ENCODE measurements at regions of chr2 and their contacts with region 1.

Region 1: DNA sequence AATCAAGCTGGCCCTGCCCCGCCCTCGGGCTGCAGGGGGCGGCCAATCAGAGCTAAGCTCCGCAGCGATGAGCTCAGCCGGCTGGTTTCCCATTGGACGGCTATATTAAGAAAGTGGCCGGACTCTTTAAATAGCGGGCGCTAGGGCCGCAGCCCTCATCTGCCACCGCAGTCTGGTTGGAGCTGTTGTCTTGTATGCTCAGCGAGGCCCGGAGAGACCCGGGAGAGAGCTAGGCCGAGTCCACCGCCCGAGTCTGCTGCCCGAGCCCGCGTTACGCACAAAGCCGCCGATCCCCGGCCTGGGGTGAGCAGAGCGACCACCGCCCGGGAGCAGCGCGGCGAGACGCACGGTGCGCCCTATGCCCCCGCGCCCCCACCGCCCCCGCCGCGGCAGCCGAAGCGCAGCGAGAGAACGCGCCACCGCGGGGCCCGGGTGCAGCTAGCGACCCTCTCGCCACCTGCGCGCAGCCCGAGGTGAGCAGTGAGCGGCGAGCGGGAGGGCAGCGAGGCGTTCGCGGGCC is at the start of gene RHOB:
- DNase-seq: peak; percentile 100
- H3K4me3 ChIP-seq: peak within 1 kb of the TSS; percentile 82 to 92
- H3K27ac ChIP-seq: peak within 1 kb of the TSS; percentile 82 to 96
- H3K4me1 ChIP-seq: peaks cover 32 to 47% of the 10 kb centered on the region in 2 experiments
- H3K27me3 ChIP-seq: no peaks in the 10 kb centered on the region
- CTCF ChIP-seq: no peak
- EP300 ChIP-seq: peak; percentile 37 to 66; a peak in 3 of 4 replicates
- RAD21 ChIP-seq: peak; percentile 46
- polyA plus RNA-seq, gene RHOB: 43.5 and 50.3 TPM in 2 replicates

Region 2: DNA sequence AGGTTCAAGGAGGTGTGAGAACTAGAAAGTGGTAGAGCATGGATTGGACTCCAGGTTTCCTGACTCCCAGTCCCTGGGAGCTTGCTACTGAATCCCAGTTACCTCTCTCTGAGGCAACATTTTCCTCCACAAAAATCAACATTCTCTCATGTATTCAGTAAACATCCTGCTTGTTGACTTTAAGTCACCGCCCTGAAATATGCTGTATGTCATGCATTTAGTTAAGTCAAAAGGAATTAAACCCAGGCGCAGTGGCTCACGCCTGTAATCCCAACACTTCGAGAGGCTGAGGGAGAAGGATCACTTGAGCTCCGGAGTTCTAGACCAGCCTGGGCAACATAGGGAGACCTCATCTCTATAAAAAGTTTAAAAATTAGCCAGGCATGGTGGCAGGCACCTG is 438.3 kb before region 1 on chr2:
- CTCF ChIA-PET with region 1: no interaction called
- POLR2A ChIA-PET with region 1: no interaction called
- DNase-seq: no peak
- H3K4me3 ChIP-seq: no peak overlapping the region
- H3K27ac ChIP-seq: no peak overlapping the region
- H3K4me1 ChIP-seq: peaks cover 0 to 29% of the 10 kb centered on the region in 2 experiments; a peak in 2 of 4 replicates
- H3K27me3 ChIP-seq: no peaks in the 10 kb centered on the region
- CTCF ChIP-seq: no peak
- EP300 ChIP-seq: no peak
- RAD21 ChIP-seq: no peak

Region 3: GRCh38 chr2:20466417-20466911 is 19.5 kb after region 1 on chr2:
- CTCF ChIA-PET with region 1: interaction called, 5 read pairs
- POLR2A ChIA-PET with region 1: interaction called, 33 read pairs
- DNase-seq: peak; percentile 47
- H3K4me3 ChIP-seq: no peak overlapping the region
- H3K27ac ChIP-seq: peak overlapping the region in 1 of 2 experiments; percentile 85; a peak in 3 of 4 replicates
- H3K4me1 ChIP-seq: peaks cover 0 to 24% of the 10 kb centered on the region in 2 experiments; a peak in 2 of 4 replicates
- H3K27me3 ChIP-seq: no peaks in the 10 kb centered on the region
- CTCF ChIP-seq: no peak
- EP300 ChIP-seq: no peak
- RAD21 ChIP-seq: no peak

Region 4: GRCh38 chr2:20525041-20526035 is 78.4 kb after region 1 on chr2:
- CTCF ChIA-PET with region 1: interaction called, 7 read pairs
- POLR2A ChIA-PET with region 1: interaction called, 64 read pairs
- DNase-seq: no peak
- H3K4me3 ChIP-seq: no peak overlapping the region
- H3K27ac ChIP-seq: no peak overlapping the region
- H3K4me1 ChIP-seq: peaks cover 0 to 30% of the 10 kb centered on the region in 2 experiments; a peak in 2 of 4 replicates
- H3K27me3 ChIP-seq: no peaks in the 10 kb centered on the region
- CTCF ChIP-seq: no peak
- EP300 ChIP-seq: no peak
- RAD21 ChIP-seq: no peak

Region 5: GRCh38 chr2:20568501-20569463 is 121.8 kb after region 1 on chr2:
- CTCF ChIA-PET with region 1: interaction called, 4 read pairs
- POLR2A ChIA-PET with region 1: interaction called, 19 read pairs
- DNase-seq: no peak
- H3K4me3 ChIP-seq: no peak overlapping the region
- H3K27ac ChIP-seq: no peak overlapping the region
- H3K4me1 ChIP-seq: peaks cover 4 to 23% of the 10 kb centered on the region in 2 experiments; a peak in 2 of 4 replicates
- H3K27me3 ChIP-seq: no peaks in the 10 kb centered on the region
- CTCF ChIP-seq: no peak
- EP300 ChIP-seq: no peak
- RAD21 ChIP-seq: no peak

Region 6: DNA sequence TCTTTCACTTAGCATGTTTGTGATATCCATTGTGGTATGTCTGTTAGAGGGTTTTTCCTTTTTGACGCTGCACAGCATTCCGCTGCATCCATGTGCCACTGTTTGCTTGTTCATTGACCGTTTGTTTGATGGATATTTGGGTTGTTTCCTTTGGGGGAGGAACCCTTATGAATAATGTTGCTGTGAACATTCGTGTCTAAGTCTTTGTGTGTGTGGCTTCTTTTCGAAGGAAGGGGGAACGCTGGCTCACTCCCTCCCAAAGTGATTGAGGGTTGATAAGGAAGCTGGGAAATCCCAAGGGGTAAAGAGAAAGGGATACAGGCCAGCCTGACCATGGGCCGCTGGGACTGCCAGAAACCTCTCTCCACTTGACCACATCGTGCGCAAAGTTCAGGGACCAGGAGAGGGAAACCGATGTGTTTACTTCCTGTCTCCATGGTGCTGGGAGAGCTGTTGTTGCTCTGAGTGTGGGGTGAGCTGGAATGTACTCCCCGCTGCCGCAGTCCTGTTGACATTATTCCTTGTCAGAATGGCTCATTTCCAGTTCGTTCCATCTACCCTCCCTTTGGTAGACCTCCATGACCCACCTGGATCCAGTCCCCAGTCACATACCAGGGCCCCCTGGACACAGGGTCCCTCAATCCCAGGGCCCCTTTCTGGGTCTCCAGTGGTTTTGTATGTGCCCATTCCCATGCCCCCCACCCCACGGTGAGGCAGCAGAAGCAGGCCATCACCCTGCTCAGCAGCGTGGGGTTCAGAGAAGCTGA is 164.3 kb after region 1 on chr2:
- CTCF ChIA-PET with region 1: interaction called, 22 read pairs
- POLR2A ChIA-PET with region 1: interaction called, 20 read pairs
- DNase-seq: no peak
- H3K4me3 ChIP-seq: no peak overlapping the region
- H3K27ac ChIP-seq: no peak overlapping the region
- H3K4me1 ChIP-seq: peaks cover 5 to 25% of the 10 kb centered on the region in 2 experiments; a peak in 1 of 4 replicates
- H3K27me3 ChIP-seq: no peaks in the 10 kb centered on the region
- CTCF ChIP-seq: no peak
- EP300 ChIP-seq: no peak
- RAD21 ChIP-seq: no peak

Region 7: GRCh38 chr2:20642055-20642971 is 195.3 kb after region 1 on chr2:
- CTCF ChIA-PET with region 1: interaction called, 188 read pairs
- POLR2A ChIA-PET with region 1: interaction called, 40 read pairs
- DNase-seq: peak; percentile 99
- H3K4me3 ChIP-seq: no peak overlapping the region; a peak in 1 of 4 replicates
- H3K27ac ChIP-seq: no peak overlapping the region
- H3K4me1 ChIP-seq: peaks cover 13 to 18% of the 10 kb centered on the region in 2 experiments; a peak in 3 of 4 replicates
- H3K27me3 ChIP-seq: no peaks in the 10 kb centered on the region
- CTCF ChIP-seq: peak; percentile 98
- EP300 ChIP-seq: no peak
- RAD21 ChIP-seq: peak; percentile 96

Measured in SK-N-SH (cell line).